PC-9 (cell line): ENCODE measurements at regions of chr2 and their contacts with region 1.

Region 1: DNA sequence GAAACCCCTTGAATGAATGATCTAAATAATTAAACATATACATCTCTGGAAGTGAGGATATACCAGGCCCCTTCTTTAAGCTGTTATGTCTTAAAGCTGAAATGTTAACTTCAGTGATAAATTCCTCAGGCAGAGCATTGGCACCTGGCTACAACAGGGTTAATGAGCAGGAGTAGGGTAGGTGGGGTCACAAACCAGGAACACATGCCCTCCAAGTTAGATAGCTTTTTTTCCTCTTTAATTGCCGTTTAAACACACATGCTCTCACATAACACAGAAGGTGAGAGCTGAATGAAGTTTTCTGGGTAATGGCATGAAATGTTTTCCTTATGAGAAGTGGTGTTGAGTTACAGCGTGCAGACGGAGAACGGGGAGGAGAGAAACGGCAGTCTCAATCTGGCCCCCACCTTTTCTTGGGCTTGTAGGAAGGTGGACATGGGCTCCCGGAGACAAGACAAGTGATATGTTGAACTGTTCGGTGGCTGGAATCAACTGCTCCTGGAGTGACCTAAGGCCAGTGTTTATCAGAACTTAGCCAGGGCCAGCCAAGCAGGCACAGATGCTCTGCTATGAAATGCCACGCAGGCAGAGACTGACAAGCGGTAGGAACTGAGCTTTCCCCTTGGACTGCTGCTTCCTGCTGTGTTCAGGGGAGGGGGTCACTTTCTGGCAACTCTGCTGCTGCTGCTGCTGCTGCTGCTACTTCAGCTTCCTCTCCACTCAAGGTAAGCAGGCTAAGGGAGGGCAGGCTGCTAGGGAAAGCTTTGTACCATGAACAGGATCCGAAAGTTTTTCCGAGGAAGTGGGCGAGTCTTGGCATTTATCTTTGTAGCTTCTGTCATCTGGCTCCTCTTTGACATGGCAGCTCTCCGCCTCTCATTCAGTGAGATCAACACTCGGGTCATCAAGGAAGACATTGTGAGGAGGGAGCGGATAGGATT is at the start of gene GALNT5:
- DNase-seq: peak in 1 of 2 experiments; percentile 16
- H3K4me3 ChIP-seq: no peak within 1 kb of the TSS
- H3K27ac ChIP-seq: no peak within 1 kb of the TSS
- H3K4me1 ChIP-seq: peaks cover 15% of the 10 kb centered on the region
- H3K27me3 ChIP-seq: no peaks in the 10 kb centered on the region
- CTCF ChIP-seq: no peak
- total RNA-seq, gene GALNT5: 1.3 and 1.9 TPM in 2 replicates

Region 2: DNA sequence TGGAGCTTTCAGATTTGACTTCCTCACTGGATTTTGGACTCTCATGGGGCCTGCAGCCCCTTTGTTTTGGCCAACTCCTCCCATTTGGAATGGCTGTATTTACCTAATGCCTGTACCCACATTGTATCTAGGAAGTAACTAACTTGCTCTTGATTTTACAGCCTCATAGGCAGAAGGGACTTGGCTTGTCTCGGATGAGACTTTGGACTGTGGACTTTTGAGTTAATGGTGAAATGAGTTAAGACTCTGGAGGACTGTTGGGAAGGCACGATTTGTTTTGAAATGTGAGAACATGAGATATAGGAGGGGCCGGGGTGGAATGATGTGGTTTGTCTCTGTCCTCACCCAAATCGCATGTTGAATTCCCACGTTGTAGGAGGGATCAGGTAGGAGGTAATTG is 233.5 kb before region 1 on chr2:
- CTCF ChIA-PET with region 1: no interaction called
- POLR2A ChIA-PET with region 1: no interaction called
- intact Hi-C with region 1: no loop called
- DNase-seq: no peak
- H3K4me3 ChIP-seq: no peak overlapping the region
- H3K27ac ChIP-seq: no peak overlapping the region
- H3K4me1 ChIP-seq: no peaks in the 10 kb centered on the region
- H3K27me3 ChIP-seq: no peaks in the 10 kb centered on the region
- CTCF ChIP-seq: no peak

Region 3: GRCh38 chr2:157245846-157246764 is 11.5 kb before region 1 on chr2:
- CTCF ChIA-PET with region 1: interaction called, 3 read pairs
- POLR2A ChIA-PET with region 1: no interaction called
- intact Hi-C with region 1: loop called (anchors 1 kb)
- DNase-seq: peak; percentile 12 to 38
- H3K4me3 ChIP-seq: no peak overlapping the region
- H3K27ac ChIP-seq: no peak overlapping the region
- H3K4me1 ChIP-seq: 0 out of 2 replicates have a peak, but pooled peaks cover 14% of the 10 kb centered on the region
- H3K27me3 ChIP-seq: no peaks in the 10 kb centered on the region
- CTCF ChIP-seq: no peak

Region 4: DNA sequence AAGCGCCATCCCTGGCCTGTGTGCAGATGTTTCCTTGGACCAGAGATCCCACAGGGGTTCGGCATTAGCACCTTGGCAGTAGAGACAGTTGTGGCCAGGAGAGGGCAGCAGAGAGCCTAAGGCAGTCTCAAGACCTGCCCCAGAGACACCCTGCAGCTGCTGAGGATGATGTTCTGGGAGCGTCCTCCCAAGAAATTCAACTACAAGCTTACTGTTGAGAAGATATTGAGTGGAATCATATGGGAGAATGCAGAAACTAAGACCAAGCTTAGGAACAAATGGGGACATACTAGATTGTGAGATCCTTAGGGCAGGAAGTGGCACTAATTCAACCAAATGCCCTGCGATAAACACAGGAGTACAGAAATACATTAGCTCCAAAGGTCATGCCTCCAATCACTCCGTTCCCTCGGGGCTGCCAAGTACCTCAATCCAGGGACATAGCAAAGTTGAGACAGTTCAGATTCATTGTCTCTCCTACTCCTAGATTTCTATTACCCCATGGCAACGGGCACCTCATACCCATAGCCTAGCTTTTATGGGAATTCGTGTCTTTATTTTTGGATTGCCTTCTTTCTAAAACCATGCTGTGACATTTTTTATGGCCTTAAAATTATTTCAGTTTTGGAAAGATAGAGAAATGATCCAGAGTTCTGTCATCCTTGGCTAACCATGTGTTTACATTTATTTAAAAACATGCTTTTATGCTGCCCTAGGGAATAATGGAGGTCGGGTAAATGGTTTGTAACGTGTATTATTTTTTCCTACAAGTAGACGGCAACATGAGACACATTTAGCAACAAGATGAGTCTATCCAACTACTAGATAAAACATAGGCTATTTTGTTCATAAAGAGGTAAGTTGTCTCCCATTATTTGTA is 70.3 kb after region 1 on chr2:
- CTCF ChIA-PET with region 1: no interaction called
- POLR2A ChIA-PET with region 1: no interaction called
- intact Hi-C with region 1: no loop called
- DNase-seq: peak in 1 of 2 experiments; percentile 51
- H3K4me3 ChIP-seq: no peak overlapping the region
- H3K27ac ChIP-seq: no peak overlapping the region
- H3K4me1 ChIP-seq: no peaks in the 10 kb centered on the region
- H3K27me3 ChIP-seq: no peaks in the 10 kb centered on the region
- CTCF ChIP-seq: peak; percentile 75

Region 5: DNA sequence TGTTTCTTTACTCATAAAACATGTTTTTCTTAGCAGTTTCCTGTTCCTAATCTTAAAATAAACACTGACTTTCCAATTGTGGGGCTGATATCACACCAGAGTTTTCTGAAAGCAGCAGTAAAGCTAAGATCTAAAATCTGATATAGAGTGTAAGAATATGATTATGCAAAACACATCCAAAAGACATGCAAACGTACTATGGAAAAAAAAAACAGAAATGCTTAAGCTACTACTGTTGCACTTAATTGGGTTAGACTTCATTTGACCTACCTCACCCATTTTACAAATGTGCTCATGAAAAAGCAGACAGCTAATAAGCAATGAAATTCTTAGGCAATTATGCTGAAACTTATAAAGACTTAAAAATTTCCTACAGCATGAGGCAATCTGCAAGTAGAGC is 175.8 kb after region 1 on chr2:
- CTCF ChIA-PET with region 1: no interaction called
- POLR2A ChIA-PET with region 1: no interaction called
- intact Hi-C with region 1: no loop called
- DNase-seq: no peak
- H3K4me3 ChIP-seq: no peak overlapping the region
- H3K27ac ChIP-seq: no peak overlapping the region
- H3K4me1 ChIP-seq: no peaks in the 10 kb centered on the region
- H3K27me3 ChIP-seq: no peaks in the 10 kb centered on the region
- CTCF ChIP-seq: no peak